MCF 10A (cell line): ENCODE measurements at regions of chr7 and their contacts with region 1.

Region 1: DNA sequence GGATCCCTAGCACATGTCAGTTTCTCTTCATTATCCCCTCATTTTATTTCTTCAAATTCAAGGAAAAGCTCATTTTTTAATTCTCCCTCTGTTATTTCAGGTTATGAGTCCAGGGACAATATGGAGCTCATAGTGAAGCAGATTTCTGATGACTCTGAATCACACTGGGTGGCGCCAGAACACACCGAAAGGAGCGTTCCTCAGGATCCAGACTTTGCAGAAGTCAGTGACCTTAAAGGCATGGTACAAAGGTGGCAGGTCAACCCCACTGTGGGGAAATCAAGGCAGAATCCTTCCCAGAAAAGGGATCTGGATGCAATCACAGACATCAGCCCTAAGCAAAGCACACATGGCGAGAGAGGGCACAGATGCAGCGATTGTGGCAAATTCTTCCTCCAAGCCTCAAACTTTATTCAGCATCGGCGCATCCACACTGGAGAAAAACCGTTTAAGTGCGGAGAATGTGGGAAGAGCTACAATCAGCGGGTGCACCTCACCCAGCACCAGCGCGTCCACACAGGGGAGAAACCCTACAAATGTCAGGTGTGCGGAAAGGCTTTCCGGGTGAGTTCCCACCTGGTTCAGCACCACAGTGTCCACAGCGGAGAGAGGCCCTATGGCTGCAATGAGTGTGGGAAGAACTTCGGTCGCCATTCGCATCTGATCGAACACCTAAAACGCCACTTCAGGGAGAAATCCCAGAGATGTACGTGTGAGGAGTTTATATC is 21.4 kb downstream of the ZKSCAN5 start:
- DNase-seq: peak; percentile 16
- H3K4me3 Mint-ChIP-seq: no peak overlapping the region
- H3K27ac Mint-ChIP-seq: no peak overlapping the region
- H3K4me1 Mint-ChIP-seq: no peaks in the 10 kb centered on the region
- H3K27me3 Mint-ChIP-seq: no peaks in the 10 kb centered on the region
- CTCF ChIP-seq: peak; percentile 20

Region 2: DNA sequence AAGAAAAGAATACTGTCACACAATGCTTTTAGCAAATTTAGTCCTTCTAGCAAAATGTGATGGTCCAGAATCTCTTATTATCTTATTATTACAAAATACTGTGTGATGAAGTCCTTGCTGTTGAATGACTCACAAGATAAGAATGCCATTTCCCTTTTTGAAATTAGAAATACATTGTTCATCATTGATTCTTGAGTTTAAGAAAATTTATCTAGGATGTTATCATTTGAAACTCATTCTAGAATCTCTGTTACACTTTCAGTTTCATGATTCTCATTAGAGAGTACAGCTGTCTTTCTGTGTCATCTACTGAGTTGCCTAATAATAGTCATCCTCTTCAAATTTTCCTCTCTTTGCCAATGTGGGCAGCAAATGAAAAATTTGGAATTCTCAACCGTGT is 11.8 kb before region 1 on chr7:
- CTCF ChIA-PET with region 1: interaction called, 10 read pairs
- POLR2A ChIA-PET with region 1: no interaction called
- intact Hi-C with region 1: no loop called
- DNase-seq: no peak
- H3K4me3 Mint-ChIP-seq: no peak overlapping the region
- H3K27ac Mint-ChIP-seq: no peak overlapping the region
- H3K4me1 Mint-ChIP-seq: no peaks in the 10 kb centered on the region
- H3K27me3 Mint-ChIP-seq: no peaks in the 10 kb centered on the region
- CTCF ChIP-seq: no peak

Region 3: GRCh38 chr7:99772565-99772964 is 246.7 kb after region 1 on chr7:
- CTCF ChIA-PET with region 1: no interaction called
- POLR2A ChIA-PET with region 1: no interaction called
- intact Hi-C with region 1: no loop called
- DNase-seq: no peak
- H3K4me3 Mint-ChIP-seq: no peak overlapping the region
- H3K27ac Mint-ChIP-seq: no peak overlapping the region
- H3K4me1 Mint-ChIP-seq: no peaks in the 10 kb centered on the region
- H3K27me3 Mint-ChIP-seq: no peaks in the 10 kb centered on the region
- CTCF ChIP-seq: no peak

Region 4: DNA sequence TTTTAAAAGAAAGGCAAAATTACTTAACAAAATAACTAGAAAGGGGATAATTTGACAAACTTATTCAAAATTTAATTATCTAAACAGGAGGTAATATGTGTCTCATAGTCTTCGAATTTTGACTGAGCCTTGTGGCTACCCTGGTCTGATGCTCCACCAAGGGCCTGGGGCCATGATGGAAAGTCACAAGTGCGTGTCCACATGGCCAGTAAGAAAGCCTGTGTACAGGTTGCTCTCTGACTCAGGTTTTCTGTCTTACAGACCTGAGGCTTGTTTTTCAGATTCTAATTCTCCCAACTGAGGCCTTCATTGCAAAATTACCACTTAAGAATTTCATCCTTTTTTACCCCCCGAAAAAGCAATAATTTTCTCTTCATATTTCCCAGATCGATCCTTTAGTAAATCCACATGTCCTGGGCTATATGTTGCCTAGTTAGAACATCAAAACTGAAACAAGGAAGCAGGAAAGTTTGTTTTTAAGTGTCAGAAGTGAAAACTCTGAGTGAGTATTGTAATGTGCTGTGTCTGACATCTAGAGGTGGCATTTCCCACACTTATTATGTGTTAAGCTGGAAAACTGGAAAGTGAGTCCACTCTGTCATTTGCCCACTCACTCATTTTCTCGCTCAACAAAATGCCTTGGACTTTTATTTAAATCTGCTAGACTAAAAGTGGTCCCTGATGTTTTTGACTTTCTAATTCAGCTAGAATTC is 311.9 kb after region 1 on chr7:
- CTCF ChIA-PET with region 1: interaction called, 12 read pairs
- POLR2A ChIA-PET with region 1: interaction called, 4 read pairs
- intact Hi-C with region 1: loop called (anchors 2 kb)
- DNase-seq: peak; percentile 30
- H3K4me3 Mint-ChIP-seq: no peak overlapping the region
- H3K27ac Mint-ChIP-seq: peak overlapping the region; percentile 36
- H3K4me1 Mint-ChIP-seq: peaks cover 7% of the 10 kb centered on the region
- H3K27me3 Mint-ChIP-seq: no peaks in the 10 kb centered on the region
- CTCF ChIP-seq: peak; percentile 48